ENCODE measurements at regions of chr7 and their contacts with region 1.

Region 1: DNA sequence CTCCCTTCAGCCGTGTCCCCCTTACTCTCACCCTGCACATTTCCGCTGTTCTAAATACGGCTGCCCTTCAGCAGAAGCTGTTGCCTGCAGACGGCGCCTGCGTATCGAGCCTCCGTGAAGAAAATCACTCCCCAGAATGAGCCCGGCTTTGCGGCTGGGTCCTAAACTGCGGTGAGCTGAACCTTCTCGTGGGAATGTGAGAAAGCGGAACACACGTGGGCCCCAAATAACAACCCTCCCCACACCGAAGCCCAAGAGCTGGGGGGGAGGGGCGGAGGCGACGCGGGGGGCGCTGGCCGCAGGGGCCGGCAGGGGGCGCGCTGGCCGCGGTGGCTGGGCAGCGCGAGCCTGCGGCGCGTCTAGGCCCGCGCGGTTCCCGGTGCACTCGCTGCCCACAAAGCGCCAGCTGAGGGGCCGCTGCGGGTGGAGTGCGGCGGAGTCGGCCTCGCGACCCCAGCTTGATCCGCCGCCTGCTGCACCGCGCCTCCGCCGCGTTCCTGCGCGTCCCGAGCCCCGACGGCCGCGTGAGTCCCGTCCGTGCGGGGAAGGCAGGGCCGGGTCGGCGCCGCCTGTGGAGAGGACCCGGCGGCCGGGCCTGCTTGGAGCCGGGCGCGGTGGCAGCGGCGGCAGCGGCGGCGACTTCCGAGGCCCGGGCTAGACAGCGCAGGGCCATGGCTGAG is at the start of gene ZNF398:
- DNase-seq: peak; percentile 99
- H3K4me3 ChIP-seq: peak within 1 kb of the TSS; percentile 64 to 95
- H3K27ac ChIP-seq: peak within 1 kb of the TSS; percentile 77 to 84
- H3K4me1 ChIP-seq: no peaks in the 10 kb centered on the region; a peak in 2 of 4 replicates
- H3K27me3 ChIP-seq: no peaks in the 10 kb centered on the region
- CTCF ChIP-seq: peak; percentile 73
- EP300 ChIP-seq: no peak; a peak in 1 of 4 replicates
- RAD21 ChIP-seq: peak; percentile 25; the same call in 1 of the 2 replicates
- polyA plus RNA-seq, gene ZNF398: 4.5 and 4.7 TPM in 2 replicates

Region 2: DNA sequence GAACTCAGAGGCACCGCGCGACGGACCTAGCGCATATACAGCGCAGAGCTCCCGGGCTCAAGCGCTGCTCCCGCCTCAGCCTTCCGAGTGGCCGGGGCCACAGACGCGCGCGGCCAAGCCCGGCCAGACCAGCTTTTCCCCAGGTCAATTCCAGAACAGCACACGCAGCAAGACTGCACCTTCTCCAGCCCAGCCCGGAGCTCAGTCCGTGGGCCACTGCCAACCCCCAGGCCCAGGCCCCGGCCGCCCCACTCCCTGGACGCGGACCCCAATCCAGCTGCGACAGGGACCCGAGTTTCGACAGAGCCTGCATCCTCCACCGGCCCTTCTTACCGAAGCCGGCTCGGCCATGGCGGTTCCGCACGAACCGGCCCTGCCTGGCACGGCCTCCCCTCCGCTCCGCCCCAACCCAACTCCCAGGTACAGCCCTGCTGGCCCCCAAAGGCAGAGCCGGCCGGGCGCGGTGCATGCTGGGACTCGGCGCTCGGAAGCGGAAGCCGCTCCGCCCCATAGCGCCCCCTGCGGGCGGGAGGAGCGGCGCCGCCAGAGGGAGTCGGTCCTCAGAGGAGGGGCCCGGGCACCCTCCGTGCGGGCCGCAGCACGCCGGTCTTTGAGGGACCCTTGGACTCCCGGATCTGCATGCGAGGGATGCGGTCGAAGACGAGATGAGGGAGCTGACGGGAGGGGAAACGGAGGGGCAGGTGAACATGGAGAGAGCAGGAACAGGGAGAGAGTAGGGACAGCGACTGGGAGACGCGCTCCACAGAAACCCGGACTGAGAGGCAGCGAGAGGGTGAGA is 21.1 kb before region 1 on chr7 and contains the start of gene ZNF425:
- CTCF ChIA-PET with region 1: interaction called, 73 read pairs
- POLR2A ChIA-PET with region 1: interaction called, 37 read pairs
- DNase-seq: peak; percentile 99
- H3K4me3 ChIP-seq: peak within 1 kb of the TSS; percentile 60 to 96
- H3K27ac ChIP-seq: peak within 1 kb of the TSS; percentile 83 to 90
- H3K4me1 ChIP-seq: peaks cover 8% of the 10 kb centered on the region in 2 experiments; a peak in 3 of 4 replicates
- H3K27me3 ChIP-seq: no peaks in the 10 kb centered on the region
- CTCF ChIP-seq: peak; percentile 97
- EP300 ChIP-seq: peak in 1 of 2 experiments; percentile 6; a peak in 2 of 4 replicates
- RAD21 ChIP-seq: peak; percentile 35
- polyA plus RNA-seq, gene ZNF425: 1.4 and 1.6 TPM in 2 replicates

Region 3: GRCh38 chr7:149161241-149161848 is 14.1 kb after region 1 on chr7:
- CTCF ChIA-PET with region 1: interaction called, 19 read pairs
- POLR2A ChIA-PET with region 1: interaction called, 3 read pairs
- DNase-seq: no peak
- H3K4me3 ChIP-seq: no peak overlapping the region
- H3K27ac ChIP-seq: no peak overlapping the region
- H3K4me1 ChIP-seq: 0 out of 4 replicates have a peak, but pooled peaks cover 0 to 6% of the 10 kb centered on the region in 2 experiments
- H3K27me3 ChIP-seq: no peaks in the 10 kb centered on the region
- CTCF ChIP-seq: no peak
- EP300 ChIP-seq: no peak
- RAD21 ChIP-seq: no peak

Region 4: GRCh38 chr7:149180722-149181449 is 33.7 kb after region 1 on chr7:
- CTCF ChIA-PET with region 1: interaction called, 24 read pairs
- POLR2A ChIA-PET with region 1: no interaction called
- DNase-seq: no peak
- H3K4me3 ChIP-seq: no peak overlapping the region
- H3K27ac ChIP-seq: peak overlapping the region; percentile 17 to 68; a peak in 3 of 4 replicates
- H3K4me1 ChIP-seq: no peaks in the 10 kb centered on the region; a peak in 2 of 4 replicates
- H3K27me3 ChIP-seq: no peaks in the 10 kb centered on the region
- CTCF ChIP-seq: no peak
- EP300 ChIP-seq: no peak
- RAD21 ChIP-seq: no peak

Region 5: GRCh38 chr7:149195180-149196150 is 48.3 kb after region 1 on chr7 and contains the start of gene ZNF282:
- CTCF ChIA-PET with region 1: interaction called, 83 read pairs
- POLR2A ChIA-PET with region 1: interaction called, 22 read pairs
- DNase-seq: peak; percentile 100
- H3K4me3 ChIP-seq: peak within 1 kb of the TSS; percentile 90 to 91
- H3K27ac ChIP-seq: peak within 1 kb of the TSS; percentile 76 to 93
- H3K4me1 ChIP-seq: peaks cover 13 to 15% of the 10 kb centered on the region in 2 experiments; a peak in 2 of 4 replicates
- H3K27me3 ChIP-seq: no peaks in the 10 kb centered on the region; the same call in 1 of the 2 replicates
- CTCF ChIP-seq: peak; percentile 77
- EP300 ChIP-seq: peak in 1 of 2 experiments; percentile 65; a peak in 1 of 4 replicates
- RAD21 ChIP-seq: peak; percentile 56
- polyA plus RNA-seq, gene ZNF282: 15.0 and 17.9 TPM in 2 replicates